ENCODE measurements at regions of chr3 and their contacts with region 1.

Region 1: DNA sequence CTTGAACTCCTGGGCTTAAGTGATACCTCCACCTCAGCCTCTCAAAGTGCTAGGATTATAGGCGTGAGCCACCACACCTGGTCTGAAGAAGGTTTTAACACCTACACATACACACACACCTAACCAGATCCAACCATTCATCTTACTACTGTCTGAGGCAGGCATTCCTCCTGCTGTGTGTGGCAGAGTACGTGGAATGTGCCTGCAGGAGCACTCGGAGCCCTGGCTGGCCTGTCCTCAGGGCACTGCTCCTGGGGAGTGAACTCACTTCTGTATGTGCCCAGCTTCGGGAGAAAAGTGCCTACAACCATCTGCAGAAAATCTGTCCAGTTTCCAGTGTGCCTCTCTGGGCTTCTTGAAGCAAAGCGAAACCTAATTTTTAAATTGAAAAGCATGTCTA is 58.2 kb upstream of the LIMD1 start:
- DNase-seq: no peak
- H3K4me3 ChIP-seq: no peak overlapping the region
- H3K27ac ChIP-seq: no peak overlapping the region
- H3K4me1 ChIP-seq: peaks cover 26% of the 10 kb centered on the region
- H3K27me3 ChIP-seq: no peaks in the 10 kb centered on the region
- CTCF ChIP-seq: no peak
- POLR2A ChIP-seq: no peak

Region 2: GRCh38 chr3:45546716-45547701 is 10.7 kb after region 1 on chr3:
- CTCF ChIA-PET with region 1: interaction called, 18 read pairs
- POLR2A ChIA-PET with region 1: no interaction called
- dilution Hi-C with region 1: no loop called
- intact Hi-C with region 1: no loop called
- DNase-seq: no peak
- H3K4me3 ChIP-seq: no peak overlapping the region
- H3K27ac ChIP-seq: no peak overlapping the region
- H3K4me1 ChIP-seq: peaks cover 26% of the 10 kb centered on the region
- H3K27me3 ChIP-seq: no peaks in the 10 kb centered on the region
- CTCF ChIP-seq: peak; percentile 46 to 56
- POLR2A ChIP-seq: no peak